RWPE1 (cell line): ENCODE measurements at regions of chr3 and their contacts with region 1.

Region 1: DNA sequence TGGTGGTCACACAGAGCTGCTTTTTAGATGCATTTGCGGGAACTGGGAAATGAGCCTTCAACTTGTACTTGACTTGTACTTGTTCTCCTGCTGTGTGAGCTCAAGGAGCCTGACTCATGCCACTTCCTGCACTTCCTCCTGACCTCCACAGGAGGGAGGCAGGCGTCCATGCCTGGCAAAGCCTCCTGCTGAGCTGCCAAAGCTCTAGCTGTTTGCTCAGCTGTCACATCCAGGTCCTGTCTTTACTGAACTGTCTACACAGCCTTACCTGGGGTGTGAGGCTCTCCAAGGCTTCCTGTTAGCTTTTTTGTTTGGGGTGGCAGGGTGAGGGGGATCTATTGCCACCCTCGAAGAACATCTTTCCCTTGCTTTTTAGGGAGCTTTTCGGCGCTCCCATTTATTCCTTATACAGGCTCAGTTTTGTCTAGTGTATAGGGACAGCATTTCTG is 6.4 kb downstream of the THPO start:
- DNase-seq: peak; percentile 86
- H3K27ac ChIP-seq: no peak overlapping the region
- CTCF ChIP-seq: peak; percentile 94

Region 2: DNA sequence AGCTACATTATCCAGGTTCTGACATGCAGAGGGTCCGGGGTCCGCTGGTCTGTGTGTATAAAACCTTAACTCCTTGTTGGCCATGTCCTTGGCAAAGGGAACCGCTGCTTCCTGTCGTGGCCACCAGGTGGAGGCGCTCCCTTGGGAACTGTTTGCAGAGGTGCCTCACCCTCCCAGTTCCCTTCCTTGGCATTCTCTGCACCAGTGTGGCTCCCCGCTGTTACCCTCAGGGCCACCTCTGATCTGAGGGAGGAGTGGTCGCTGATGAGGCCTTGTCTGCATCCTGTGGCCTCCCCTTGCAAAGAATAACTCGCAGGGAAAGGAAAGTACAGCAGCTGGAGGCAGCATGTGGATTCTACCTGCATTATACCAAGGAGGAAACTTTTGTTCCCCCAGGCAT is 97.8 kb after region 1 on chr3:
- CTCF ChIA-PET with region 1: interaction called, 13 read pairs
- POLR2A ChIA-PET with region 1: no interaction called
- DNase-seq: peak; percentile 45
- H3K27ac ChIP-seq: no peak overlapping the region
- CTCF ChIP-seq: peak; percentile 46

Region 3: GRCh38 chr3:184540777-184541681 is 169.4 kb after region 1 on chr3:
- CTCF ChIA-PET with region 1: interaction called, 44 read pairs
- POLR2A ChIA-PET with region 1: no interaction called
- DNase-seq: peak; percentile 68
- H3K27ac ChIP-seq: no peak overlapping the region
- CTCF ChIP-seq: peak; percentile 66